Activated CD4-positive, alpha-beta T cell treated with anti-CD3 and anti-CD28 coated beads for 36 hours (primary cell): ENCODE measurements at regions of chr3 and their contacts with region 1.

Region 1: GRCh38 chr3:56251343-56251945 is 216.8 kb downstream of the ERC2 start:
- DNase-seq: peak; percentile 43
- ATAC-seq: no peak
- H3K4me3 Mint-ChIP-seq: no peak overlapping the region
- H3K27ac Mint-ChIP-seq: no peak overlapping the region
- H3K4me1 Mint-ChIP-seq: no peaks in the 10 kb centered on the region
- H3K27me3 Mint-ChIP-seq: peaks cover 3% of the 10 kb centered on the region

Region 2: DNA sequence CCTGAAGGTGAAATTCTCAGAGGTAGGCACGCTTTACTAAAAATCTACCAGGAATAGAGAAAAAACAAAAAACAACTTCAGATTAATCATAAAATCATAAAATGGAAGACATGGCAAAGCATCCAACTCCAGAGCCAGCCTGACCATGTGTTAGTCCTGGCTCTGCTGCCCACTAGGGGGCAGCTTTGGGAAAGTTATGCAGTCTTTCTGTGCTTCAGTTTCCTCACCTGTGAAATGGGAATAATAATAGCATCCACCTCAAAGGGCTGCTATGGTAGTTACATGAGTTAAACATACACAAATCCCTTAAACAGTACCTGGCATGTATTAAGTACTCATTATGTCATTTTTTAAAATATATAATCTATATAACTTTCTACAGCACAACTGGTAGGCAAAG is 816.7 kb before region 1 on chr3:
- CTCF ChIA-PET with region 1: interaction called, 3 read pairs
- POLR2A ChIA-PET with region 1: no interaction called
- intact Hi-C with region 1: loop called in 1 of 2 experiments (anchors 5 kb)
- DNase-seq: peak; percentile 45
- ATAC-seq: no peak
- H3K4me3 Mint-ChIP-seq: no peak overlapping the region
- H3K27ac Mint-ChIP-seq: no peak overlapping the region
- H3K4me1 Mint-ChIP-seq: no peaks in the 10 kb centered on the region
- H3K27me3 Mint-ChIP-seq: peaks cover 5% of the 10 kb centered on the region

Region 3: GRCh38 chr3:56144805-56145204 is 106.6 kb before region 1 on chr3:
- CTCF ChIA-PET with region 1: no interaction called
- POLR2A ChIA-PET with region 1: no interaction called
- intact Hi-C with region 1: no loop called
- DNase-seq: no peak
- ATAC-seq: no peak
- H3K4me3 Mint-ChIP-seq: no peak overlapping the region
- H3K27ac Mint-ChIP-seq: no peak overlapping the region
- H3K4me1 Mint-ChIP-seq: no peaks in the 10 kb centered on the region
- H3K27me3 Mint-ChIP-seq: peaks cover 7% of the 10 kb centered on the region

Region 4: DNA sequence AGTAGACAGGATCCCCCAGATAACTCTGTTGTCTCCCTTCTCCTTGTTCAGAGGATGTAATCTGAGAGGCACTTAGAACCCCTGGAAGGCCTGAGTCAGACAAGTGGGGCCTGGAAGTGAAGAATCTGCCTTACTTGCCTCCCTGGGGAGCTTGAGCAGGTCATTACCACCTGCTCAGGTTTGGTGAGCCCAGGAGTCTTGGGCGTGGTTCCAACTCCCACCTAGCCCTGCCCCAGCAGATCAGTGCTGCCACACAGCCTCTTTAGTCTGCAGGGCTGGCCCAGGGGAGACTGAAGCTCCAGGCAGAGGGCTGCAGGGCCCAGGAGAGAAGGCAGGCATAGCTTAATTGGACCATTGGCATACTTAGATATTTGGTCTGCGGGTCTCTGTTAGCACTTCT is 13.1 kb before region 1 on chr3:
- CTCF ChIA-PET with region 1: interaction called, 22 read pairs
- POLR2A ChIA-PET with region 1: no interaction called
- intact Hi-C with region 1: no loop called
- DNase-seq: no peak
- ATAC-seq: no peak
- H3K4me3 Mint-ChIP-seq: no peak overlapping the region
- H3K27ac Mint-ChIP-seq: no peak overlapping the region
- H3K4me1 Mint-ChIP-seq: no peaks in the 10 kb centered on the region
- H3K27me3 Mint-ChIP-seq: peaks cover 15% of the 10 kb centered on the region

Region 5: GRCh38 chr3:56269755-56270535 is 18.5 kb after region 1 on chr3:
- CTCF ChIA-PET with region 1: no interaction called
- POLR2A ChIA-PET with region 1: no interaction called
- intact Hi-C with region 1: no loop called
- DNase-seq: no peak
- ATAC-seq: no peak
- H3K4me3 Mint-ChIP-seq: no peak overlapping the region
- H3K27ac Mint-ChIP-seq: no peak overlapping the region
- H3K4me1 Mint-ChIP-seq: no peaks in the 10 kb centered on the region
- H3K27me3 Mint-ChIP-seq: peaks cover 10% of the 10 kb centered on the region

Region 6: DNA sequence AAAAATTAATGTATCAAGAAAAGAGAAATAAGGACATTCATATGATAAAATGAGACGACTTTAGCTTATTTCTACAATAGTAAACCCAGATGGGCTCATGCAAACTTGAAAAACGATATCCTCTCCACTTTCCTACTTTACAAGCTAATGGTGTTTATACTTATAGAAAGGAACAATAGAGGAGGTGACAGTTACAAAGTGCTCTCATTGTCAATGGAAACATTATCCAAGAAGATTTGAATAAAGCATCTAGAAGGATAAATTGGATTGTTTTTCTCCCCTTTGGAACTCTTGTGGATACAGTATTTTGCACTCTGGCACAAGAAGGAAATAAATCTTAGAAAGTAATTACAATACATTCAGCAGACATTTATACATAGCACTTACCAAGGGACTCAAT is 285.3 kb after region 1 on chr3:
- CTCF ChIA-PET with region 1: no interaction called
- POLR2A ChIA-PET with region 1: no interaction called
- intact Hi-C with region 1: no loop called
- DNase-seq: no peak
- ATAC-seq: no peak
- H3K4me3 Mint-ChIP-seq: no peak overlapping the region
- H3K27ac Mint-ChIP-seq: no peak overlapping the region
- H3K4me1 Mint-ChIP-seq: no peaks in the 10 kb centered on the region
- H3K27me3 Mint-ChIP-seq: peaks cover 5% of the 10 kb centered on the region